Activated T-helper 1 cell treated with anti-CD3 and anti-CD28 coated beads, Interleukin-12 subunit alpha, Interleukin-12 subunit beta, Interleukin-2, Interleukin-4 antibody, amounts not matched to agents 30 ng/mL and 10 ng/mL and 1 ng/mL, durations not matched to agents 14 hours and 24 hours and 36 hours (primary cell): ENCODE measurements at regions of chr6 and their contacts with region 1.

Region 1: DNA sequence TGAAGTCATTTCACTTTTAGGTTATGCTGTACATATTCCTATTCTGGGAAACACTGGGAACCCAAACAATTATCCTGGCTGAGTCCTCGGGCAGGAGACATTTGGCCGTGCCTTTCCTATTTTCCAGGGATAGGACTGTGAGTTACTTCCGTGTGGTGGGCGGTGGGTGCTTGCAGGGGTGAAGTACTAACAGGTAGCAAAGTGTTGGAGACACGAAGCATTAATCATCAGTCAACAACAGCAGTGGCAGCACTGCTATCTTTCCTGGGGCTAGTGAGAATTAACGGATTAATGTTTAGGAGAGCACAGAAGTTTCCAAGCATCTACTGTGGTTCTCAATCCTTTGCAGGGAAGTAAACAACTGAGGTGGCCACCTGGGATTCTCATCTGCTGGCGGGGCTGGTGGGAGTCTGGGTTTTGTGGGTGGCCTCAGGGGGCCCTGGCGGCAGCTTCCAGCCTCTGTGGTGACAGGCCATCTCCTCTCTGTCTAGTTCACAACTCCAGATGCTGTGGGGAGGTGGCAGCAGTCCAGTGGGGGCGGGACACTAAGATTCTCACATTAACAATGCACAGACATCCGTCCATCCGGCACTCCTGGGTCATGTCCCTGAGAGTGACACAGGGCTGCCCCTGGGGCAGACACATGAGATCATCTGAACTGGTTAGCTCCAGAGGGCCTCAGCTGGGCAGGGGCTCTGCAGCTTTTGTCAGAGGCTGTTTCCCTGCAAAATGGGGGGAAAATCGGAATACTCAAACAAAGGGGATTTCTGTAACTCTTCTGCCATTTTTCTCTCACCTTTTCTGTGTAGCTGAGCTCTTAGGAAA is 90.9 kb downstream of the GJA10 start:
- DNase-seq: no peak
- H3K4me3 Mint-ChIP-seq: no peak overlapping the region
- H3K27ac Mint-ChIP-seq: peak overlapping the region; percentile 36
- H3K4me1 Mint-ChIP-seq: peaks cover 68% of the 10 kb centered on the region
- H3K27me3 Mint-ChIP-seq: peaks cover 1% of the 10 kb centered on the region

Region 2: DNA sequence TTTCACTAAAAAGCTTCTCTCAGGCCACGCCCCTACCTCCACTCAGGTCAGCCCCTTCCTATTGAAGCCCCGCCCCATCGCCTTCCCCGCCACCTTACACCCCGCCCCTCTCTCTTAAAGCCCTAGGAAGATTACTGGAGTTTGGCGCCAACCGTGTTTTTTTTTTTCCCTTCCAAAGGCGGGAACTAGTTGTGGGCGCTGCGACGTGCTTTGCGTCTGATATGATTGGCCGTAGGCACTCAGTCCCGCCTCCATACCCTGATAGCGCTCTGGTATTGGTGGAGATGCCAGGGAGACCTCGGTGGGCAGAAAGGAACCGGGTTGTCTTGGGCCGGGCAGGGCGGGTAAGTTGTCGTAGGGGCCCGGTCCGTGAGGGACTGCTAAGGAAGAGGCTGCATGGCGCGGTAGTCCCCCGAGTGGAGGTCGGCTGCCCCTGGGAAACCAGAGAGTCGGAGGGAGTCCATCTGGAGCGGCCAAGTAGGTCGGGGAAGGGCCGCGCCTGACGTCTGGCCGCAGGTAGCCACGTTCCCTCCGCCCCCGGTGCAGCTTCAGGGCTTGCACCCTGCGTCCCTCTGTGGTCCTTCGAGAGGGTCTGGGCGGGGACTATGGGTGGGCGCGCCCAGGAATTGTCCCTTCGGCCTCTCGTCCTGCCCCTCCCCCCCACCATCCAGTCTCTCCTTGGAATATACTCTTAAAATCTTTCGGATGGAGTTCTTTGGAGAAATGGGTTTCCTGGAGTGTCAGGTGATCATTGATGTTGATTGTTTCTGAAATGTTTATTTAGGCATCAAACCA is 155.3 kb before region 1 on chr6 and contains the start of gene CASP8AP2:
- intact Hi-C with region 1: no loop called
- DNase-seq: peak; percentile 93
- H3K4me3 Mint-ChIP-seq: peak within 1 kb of the TSS; percentile 97
- H3K27ac Mint-ChIP-seq: peak within 1 kb of the TSS; percentile 91
- H3K4me1 Mint-ChIP-seq: peaks cover 23% of the 10 kb centered on the region
- H3K27me3 Mint-ChIP-seq: no peaks in the 10 kb centered on the region
- total RNA-seq, gene CASP8AP2: 38.3 and 40.2 TPM in 2 replicates

Region 3: GRCh38 chr6:89952686-89953085 is 32.5 kb before region 1 on chr6:
- intact Hi-C with region 1: loop called (anchors 5 kb)
- DNase-seq: peak; percentile 54
- H3K4me3 Mint-ChIP-seq: peak overlapping the region; percentile 53
- H3K27ac Mint-ChIP-seq: peak overlapping the region; percentile 61
- H3K4me1 Mint-ChIP-seq: peaks cover 71% of the 10 kb centered on the region
- H3K27me3 Mint-ChIP-seq: no peaks in the 10 kb centered on the region

Region 4: GRCh38 chr6:89966228-89966544 is 19.0 kb before region 1 on chr6:
- intact Hi-C with region 1: loop called (anchors 2 kb)
- DNase-seq: no peak
- H3K4me3 Mint-ChIP-seq: no peak overlapping the region
- H3K27ac Mint-ChIP-seq: peak overlapping the region; percentile 92
- H3K4me1 Mint-ChIP-seq: peaks cover 59% of the 10 kb centered on the region
- H3K27me3 Mint-ChIP-seq: peaks cover 3% of the 10 kb centered on the region

Region 5: GRCh38 chr6:90025523-90026061 is 40.5 kb after region 1 on chr6:
- intact Hi-C with region 1: loop called (anchors 2 kb)
- DNase-seq: no peak
- H3K4me3 Mint-ChIP-seq: peak overlapping the region; percentile 69
- H3K27ac Mint-ChIP-seq: peak overlapping the region; percentile 95
- H3K4me1 Mint-ChIP-seq: peaks cover 77% of the 10 kb centered on the region
- H3K27me3 Mint-ChIP-seq: no peaks in the 10 kb centered on the region